Body of pancreas (tissue), 4 donors: ENCODE measurements at regions of chr15 and their contacts with region 1.

Region 1: DNA sequence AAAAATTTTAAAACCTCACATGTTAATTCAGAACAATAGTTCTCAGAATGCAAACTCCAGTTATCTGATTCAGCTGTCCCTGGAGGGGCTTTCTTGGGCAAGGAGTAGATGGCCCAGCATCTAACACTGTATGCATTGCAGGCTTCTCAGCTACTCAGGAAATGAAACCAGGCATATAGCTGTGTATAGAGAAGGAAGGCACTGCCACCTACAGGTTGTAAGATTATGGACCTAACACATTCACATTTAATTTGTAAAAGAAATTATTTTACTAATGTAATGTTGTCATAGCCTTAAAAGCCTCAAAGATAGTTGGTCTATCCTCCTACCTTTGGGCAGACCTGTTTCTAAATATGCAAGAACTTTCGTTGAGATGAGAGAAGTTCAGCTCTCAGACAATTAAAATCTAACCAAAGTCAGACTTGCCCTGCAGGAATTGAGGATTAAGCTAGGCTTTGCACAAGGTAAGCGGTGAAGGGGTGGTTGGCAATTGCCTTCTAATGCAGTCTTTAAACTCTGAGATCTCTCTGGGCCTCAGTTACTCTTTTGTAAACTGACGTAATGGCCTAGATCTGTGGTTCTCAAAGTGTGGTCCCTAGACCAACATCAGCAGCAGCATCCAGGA is 132.8 kb upstream of the SLC24A5 start:
- DNase-seq: peak; percentile 37 to 67 (median 42)
- ATAC-seq: peak; percentile 91
- H3K4me3 ChIP-seq: no peak overlapping the region
- H3K27ac ChIP-seq: no peak overlapping the region
- H3K4me1 ChIP-seq: no peaks in the 10 kb centered on the region
- H3K27me3 ChIP-seq: no peaks in the 10 kb centered on the region
- CTCF ChIP-seq: peak; percentile 32 to 91 (median 79)
- POLR2A ChIP-seq: no peak

Region 2: GRCh38 chr15:47194718-47195117 is 793.3 kb before region 1 on chr15:
- intact Hi-C with region 1: loop called (anchors 5 kb)
- DNase-seq: no peak
- ATAC-seq: no peak
- H3K4me3 ChIP-seq: no peak overlapping the region
- H3K27ac ChIP-seq: no peak overlapping the region
- H3K4me1 ChIP-seq: no peaks in the 10 kb centered on the region
- H3K27me3 ChIP-seq: no peaks in the 10 kb centered on the region
- CTCF ChIP-seq: peak in 1 of 7 experiments; percentile 10
- POLR2A ChIP-seq: no peak

Region 3: DNA sequence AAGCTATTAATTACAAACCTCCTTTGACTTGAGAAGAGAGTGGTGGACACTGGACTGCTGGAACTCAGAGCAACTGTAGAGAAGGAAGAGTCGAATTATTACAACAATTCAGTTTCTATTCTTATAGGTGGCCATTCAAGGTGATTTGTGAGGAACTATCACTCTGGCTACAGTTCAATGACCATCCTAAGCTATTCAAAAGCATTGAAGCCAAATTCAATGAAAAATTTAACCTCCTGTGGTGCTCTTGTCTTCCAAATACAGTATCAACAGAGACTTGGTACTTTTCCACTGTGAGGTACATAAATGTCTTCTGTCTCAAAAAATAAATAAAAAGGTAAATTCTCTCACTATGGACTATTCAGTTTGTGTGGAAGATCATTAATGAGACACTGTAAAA is 784.0 kb before region 1 on chr15:
- intact Hi-C with region 1: loop called (anchors 5 kb)
- DNase-seq: no peak
- ATAC-seq: no peak
- H3K4me3 ChIP-seq: no peak overlapping the region
- H3K27ac ChIP-seq: no peak overlapping the region
- H3K4me1 ChIP-seq: no peaks in the 10 kb centered on the region
- H3K27me3 ChIP-seq: no peaks in the 10 kb centered on the region
- CTCF ChIP-seq: no peak
- POLR2A ChIP-seq: no peak

Region 4: DNA sequence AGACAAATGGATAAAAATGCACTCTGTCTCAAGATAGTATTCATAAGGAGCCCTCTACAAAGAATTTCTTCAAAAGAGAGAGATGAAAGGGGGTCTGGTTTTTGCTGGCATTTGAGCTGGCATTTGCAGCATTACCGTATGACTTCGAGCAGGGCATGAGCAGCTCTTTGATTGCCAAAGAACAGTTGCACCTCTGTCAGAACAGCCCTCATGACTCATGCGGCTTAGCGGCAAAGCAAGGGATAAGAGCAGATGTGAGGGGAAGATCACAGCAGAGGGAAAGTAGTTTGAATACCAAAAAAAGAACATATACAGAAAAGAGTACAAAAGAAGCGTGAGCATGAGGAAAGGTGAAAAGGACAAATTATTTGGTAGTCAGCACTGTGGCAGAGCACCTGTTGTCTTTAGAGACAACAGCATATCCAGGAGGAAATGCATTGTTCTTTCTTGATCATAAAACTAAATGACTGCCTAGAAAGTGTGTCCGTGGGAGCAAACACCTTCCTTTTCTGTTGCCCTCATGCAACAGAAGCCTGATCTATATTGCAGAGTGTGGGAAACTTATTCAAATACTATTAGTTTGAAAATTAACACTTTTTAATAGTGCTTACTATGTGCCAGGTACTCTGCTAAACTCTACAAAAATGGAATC is 52.3 kb after region 1 on chr15:
- intact Hi-C with region 1: no loop called
- DNase-seq: no peak
- ATAC-seq: no peak
- H3K4me3 ChIP-seq: no peak overlapping the region
- H3K27ac ChIP-seq: no peak overlapping the region
- H3K4me1 ChIP-seq: no peaks in the 10 kb centered on the region
- H3K27me3 ChIP-seq: no peaks in the 10 kb centered on the region
- CTCF ChIP-seq: no peak
- POLR2A ChIP-seq: no peak

Region 5: GRCh38 chr15:48052946-48053345 is 64.9 kb after region 1 on chr15:
- intact Hi-C with region 1: no loop called
- DNase-seq: no peak
- ATAC-seq: no peak
- H3K4me3 ChIP-seq: no peak overlapping the region
- H3K27ac ChIP-seq: no peak overlapping the region
- H3K4me1 ChIP-seq: no peaks in the 10 kb centered on the region
- H3K27me3 ChIP-seq: no peaks in the 10 kb centered on the region
- CTCF ChIP-seq: no peak
- POLR2A ChIP-seq: no peak